ENCODE measurements at regions of chr9 and their contacts with region 1.

Region 1: GRCh38 chr9:34546834-34547827 is 24.3 kb upstream of the ENHO start:
- DNase-seq: peak; percentile 58
- H3K4me3 Mint-ChIP-seq: no peak overlapping the region
- H3K27ac Mint-ChIP-seq: no peak overlapping the region
- H3K4me1 Mint-ChIP-seq: no peaks in the 10 kb centered on the region
- H3K27me3 Mint-ChIP-seq: peaks cover 16% of the 10 kb centered on the region
- CTCF ChIP-seq: peak; percentile 67

Region 2: DNA sequence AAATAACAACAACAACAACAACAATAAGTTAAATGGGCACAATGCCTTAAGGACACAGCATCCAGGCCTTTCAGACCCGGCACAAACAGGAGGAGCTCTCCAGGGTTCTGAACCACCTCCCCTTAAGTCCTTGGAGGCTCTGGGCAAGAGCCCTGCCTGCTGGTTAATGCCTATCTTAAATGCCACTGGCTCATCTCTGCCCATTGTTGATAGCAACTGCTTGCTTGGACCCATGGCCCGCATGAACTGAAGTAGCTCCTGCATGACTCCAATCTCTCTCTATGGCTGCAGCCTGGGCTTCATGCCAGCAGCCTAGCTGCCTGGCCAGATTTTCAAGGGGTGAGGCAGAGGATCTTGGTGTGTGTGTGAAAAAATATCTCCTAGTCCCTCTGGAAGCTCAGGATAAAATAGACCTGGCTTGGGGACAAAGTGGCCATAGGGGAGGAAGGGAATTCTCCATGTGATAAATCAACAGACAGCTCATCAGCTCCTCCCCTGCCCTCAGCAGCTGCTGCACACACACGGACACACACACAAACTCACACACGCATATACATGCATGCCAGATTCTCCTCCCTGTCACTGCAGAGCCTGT is 116.2 kb before region 1 on chr9:
- CTCF ChIA-PET with region 1: interaction called, 10 read pairs
- POLR2A ChIA-PET with region 1: no interaction called
- intact Hi-C with region 1: no loop called
- DNase-seq: peak; percentile 70
- H3K4me3 Mint-ChIP-seq: no peak overlapping the region
- H3K27ac Mint-ChIP-seq: no peak overlapping the region
- H3K4me1 Mint-ChIP-seq: no peaks in the 10 kb centered on the region
- H3K27me3 Mint-ChIP-seq: no peaks in the 10 kb centered on the region
- CTCF ChIP-seq: no peak

Region 3: GRCh38 chr9:34437006-34437925 is 109.9 kb before region 1 on chr9:
- CTCF ChIA-PET with region 1: interaction called, 15 read pairs
- POLR2A ChIA-PET with region 1: no interaction called
- intact Hi-C with region 1: loop called (anchors 1 kb)
- DNase-seq: peak; percentile 81
- H3K4me3 Mint-ChIP-seq: no peak overlapping the region
- H3K27ac Mint-ChIP-seq: no peak overlapping the region
- H3K4me1 Mint-ChIP-seq: no peaks in the 10 kb centered on the region
- H3K27me3 Mint-ChIP-seq: no peaks in the 10 kb centered on the region
- CTCF ChIP-seq: peak; percentile 74

Region 4: DNA sequence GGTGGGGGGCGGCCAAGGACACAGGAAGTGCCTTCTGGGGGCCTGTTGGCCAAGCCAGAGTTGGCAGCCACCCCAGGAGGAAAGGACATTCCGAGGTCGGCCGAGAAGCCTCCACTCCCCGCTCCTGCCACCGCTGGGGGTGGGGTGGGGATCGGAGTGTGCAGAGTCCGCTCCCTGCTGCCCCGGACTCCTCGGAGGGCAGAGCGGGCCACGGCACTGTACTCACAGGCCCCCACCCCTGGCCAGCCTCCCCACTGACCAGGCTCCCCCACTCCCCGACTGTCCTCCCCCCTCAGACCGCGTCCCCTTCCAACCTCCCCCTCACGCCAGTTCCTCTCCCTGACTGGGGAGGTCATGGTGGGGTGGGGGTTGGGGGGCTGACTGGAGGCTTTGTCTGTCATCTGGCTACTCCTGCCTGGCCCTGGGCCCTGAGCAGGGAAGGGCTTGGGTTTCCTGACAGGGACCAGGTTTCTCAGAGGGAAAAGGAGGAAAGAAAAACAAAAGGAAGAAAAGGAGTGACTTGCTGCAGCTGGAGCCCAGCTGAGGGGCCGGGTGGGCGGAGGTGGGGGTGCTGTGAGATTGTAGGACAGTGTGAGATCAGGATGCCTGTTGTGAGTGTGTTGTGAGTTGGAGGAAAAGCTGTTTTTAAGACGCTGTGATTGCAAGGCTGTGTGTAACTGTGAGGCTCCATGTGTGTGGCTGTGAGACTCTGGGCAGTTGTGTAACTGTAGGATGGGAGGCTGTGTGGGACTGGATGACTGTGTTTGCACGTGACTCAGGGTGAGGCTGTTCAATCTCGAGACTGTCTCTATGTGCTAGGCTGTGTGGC is 12.7 kb after region 1 on chr9:
- CTCF ChIA-PET with region 1: interaction called, 12 read pairs
- POLR2A ChIA-PET with region 1: no interaction called
- intact Hi-C with region 1: no loop called
- DNase-seq: peak; percentile 50
- H3K4me3 Mint-ChIP-seq: no peak overlapping the region
- H3K27ac Mint-ChIP-seq: no peak overlapping the region
- H3K4me1 Mint-ChIP-seq: peaks cover 7% of the 10 kb centered on the region
- H3K27me3 Mint-ChIP-seq: peaks cover 34% of the 10 kb centered on the region
- CTCF ChIP-seq: no peak